Activated CD4-positive, alpha-beta T cell treated with anti-CD3 and anti-CD28 coated beads for 36 hours (primary cell): ENCODE measurements at regions of chr20 and their contacts with region 1.

Region 1: GRCh38 chr20:53578492-53579222 is 15.0 kb downstream of the ZNF217 start:
- DNase-seq: peak; percentile 62
- ATAC-seq: peak; percentile 45
- H3K4me3 Mint-ChIP-seq: peak overlapping the region; percentile 70
- H3K27ac Mint-ChIP-seq: peak overlapping the region; percentile 83
- H3K4me1 Mint-ChIP-seq: peaks cover 91% of the 10 kb centered on the region
- H3K27me3 Mint-ChIP-seq: no peaks in the 10 kb centered on the region

Region 2: GRCh38 chr20:53623454-53624211 is 45.0 kb after region 1 on chr20:
- CTCF ChIA-PET with region 1: interaction called, 4 read pairs
- POLR2A ChIA-PET with region 1: no interaction called
- intact Hi-C with region 1: loop called in 1 of 2 experiments (anchors 5 kb)
- DNase-seq: peak; percentile 65
- ATAC-seq: peak; percentile 78
- H3K4me3 Mint-ChIP-seq: peak overlapping the region; percentile 67
- H3K27ac Mint-ChIP-seq: peak overlapping the region; percentile 97
- H3K4me1 Mint-ChIP-seq: peaks cover 37% of the 10 kb centered on the region
- H3K27me3 Mint-ChIP-seq: no peaks in the 10 kb centered on the region

Region 3: DNA sequence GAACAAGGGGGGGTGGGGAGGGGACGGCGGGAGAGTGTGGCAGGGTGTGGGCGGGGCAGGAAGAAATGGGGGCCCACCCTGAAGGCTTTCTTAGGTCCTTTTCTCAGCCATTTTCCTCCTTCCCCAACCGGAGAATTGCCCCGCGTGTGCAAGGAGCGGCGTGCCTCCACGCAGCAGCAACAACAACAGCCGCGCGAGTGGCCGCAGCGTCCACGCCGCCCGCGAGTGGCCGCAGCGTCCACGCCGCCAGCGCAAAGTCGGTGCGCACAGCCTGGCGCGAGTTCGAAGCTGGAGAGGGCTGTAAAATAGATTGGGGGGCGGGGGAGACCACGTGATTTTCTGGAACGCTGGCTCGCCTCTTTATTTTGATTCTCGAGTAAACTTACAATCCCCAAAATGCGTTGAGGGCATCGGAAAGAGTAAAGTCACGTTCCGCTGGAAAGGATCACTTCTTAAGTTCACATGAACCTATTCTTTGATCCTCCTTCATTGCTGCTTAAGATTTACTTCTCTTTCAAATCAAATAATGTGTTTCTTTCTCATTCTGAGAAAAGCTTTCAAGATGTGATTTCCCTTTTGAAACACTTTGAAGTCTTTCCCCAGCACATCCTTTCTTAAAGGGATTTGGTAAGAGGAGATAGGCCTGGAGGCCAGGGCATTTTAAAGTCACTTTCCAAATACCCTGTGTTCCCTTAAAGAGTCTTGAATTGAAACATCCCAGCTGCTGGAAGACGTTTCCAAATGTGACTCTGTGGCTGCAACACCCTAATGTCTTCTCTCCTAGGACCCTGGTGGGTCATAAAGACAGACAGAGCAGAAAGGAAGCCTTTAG is 81.6 kb after region 1 on chr20:
- CTCF ChIA-PET with region 1: interaction called, 8 read pairs
- POLR2A ChIA-PET with region 1: no interaction called
- intact Hi-C with region 1: loop called (anchors 1 to 5 kb)
- DNase-seq: peak; percentile 69
- ATAC-seq: peak; percentile 61
- H3K4me3 Mint-ChIP-seq: peak overlapping the region; percentile 74
- H3K27ac Mint-ChIP-seq: peak overlapping the region; percentile 93
- H3K4me1 Mint-ChIP-seq: peaks cover 69% of the 10 kb centered on the region
- H3K27me3 Mint-ChIP-seq: no peaks in the 10 kb centered on the region

Region 4: GRCh38 chr20:53869466-53870258 is 291.0 kb after region 1 on chr20:
- CTCF ChIA-PET with region 1: interaction called, 6 read pairs
- POLR2A ChIA-PET with region 1: no interaction called
- intact Hi-C with region 1: loop called (anchors 1 kb)
- DNase-seq: peak; percentile 83
- ATAC-seq: peak; percentile 84
- H3K4me3 Mint-ChIP-seq: peak overlapping the region; percentile 18
- H3K27ac Mint-ChIP-seq: peak overlapping the region; percentile 90
- H3K4me1 Mint-ChIP-seq: peaks cover 75% of the 10 kb centered on the region
- H3K27me3 Mint-ChIP-seq: no peaks in the 10 kb centered on the region

Region 5: GRCh38 chr20:54207743-54208547 is 629.3 kb after region 1 on chr20 and contains the start of gene PFDN4:
- CTCF ChIA-PET with region 1: no interaction called
- POLR2A ChIA-PET with region 1: no interaction called
- intact Hi-C with region 1: loop called in 1 of 2 experiments (anchors 10 kb)
- DNase-seq: peak; percentile 88
- ATAC-seq: peak; percentile 82
- H3K4me3 Mint-ChIP-seq: peak within 1 kb of the TSS; percentile 80
- H3K27ac Mint-ChIP-seq: peak within 1 kb of the TSS; percentile 99
- H3K4me1 Mint-ChIP-seq: peaks cover 47% of the 10 kb centered on the region
- H3K27me3 Mint-ChIP-seq: no peaks in the 10 kb centered on the region
- total RNA-seq, gene PFDN4: 55.4 to 60.5 TPM